BJ (cell line): ENCODE measurements at regions of chr22 and their contacts with region 1.

Region 1: GRCh38 chr22:33487041-33487716 is 429.0 kb upstream of the SYN3 start:
- DNase-seq: no peak
- H3K4me3 ChIP-seq: no peak overlapping the region
- H3K27me3 ChIP-seq: no peaks in the 10 kb centered on the region
- CTCF ChIP-seq: no peak

Region 2: GRCh38 chr22:33314316-33314715 is 172.9 kb before region 1 on chr22:
- CTCF ChIA-PET with region 1: no interaction called
- POLR2A ChIA-PET with region 1: interaction called, 15 read pairs
- DNase-seq: no peak
- H3K4me3 ChIP-seq: no peak overlapping the region
- H3K27me3 ChIP-seq: no peaks in the 10 kb centered on the region
- CTCF ChIP-seq: no peak

Region 3: GRCh38 chr22:33438273-33438672 is 48.9 kb before region 1 on chr22:
- CTCF ChIA-PET with region 1: no interaction called
- POLR2A ChIA-PET with region 1: no interaction called
- DNase-seq: peak; percentile 83
- H3K4me3 ChIP-seq: no peak overlapping the region
- H3K27me3 ChIP-seq: no peaks in the 10 kb centered on the region
- CTCF ChIP-seq: no peak

Region 4: GRCh38 chr22:33504941-33505625 is 17.9 kb after region 1 on chr22:
- CTCF ChIA-PET with region 1: no interaction called
- POLR2A ChIA-PET with region 1: no interaction called
- DNase-seq: no peak
- H3K4me3 ChIP-seq: no peak overlapping the region
- H3K27me3 ChIP-seq: no peaks in the 10 kb centered on the region
- CTCF ChIP-seq: no peak

Region 5: GRCh38 chr22:33539902-33540751 is 52.9 kb after region 1 on chr22:
- CTCF ChIA-PET with region 1: no interaction called
- POLR2A ChIA-PET with region 1: no interaction called
- DNase-seq: no peak
- H3K4me3 ChIP-seq: no peak overlapping the region
- H3K27me3 ChIP-seq: no peaks in the 10 kb centered on the region
- CTCF ChIP-seq: no peak